Activated naive CD4-positive, alpha-beta T cell treated with anti-CD3 and anti-CD28 coated beads for 36 hours (primary cell): ENCODE measurements at regions of chr6 and their contacts with region 1.

Region 1: GRCh38 chr6:154218301-154218700 is 138.3 kb downstream of the IPCEF1 start:
- DNase-seq: peak; percentile 74
- H3K4me3 Mint-ChIP-seq: peak overlapping the region; percentile 65
- H3K27ac Mint-ChIP-seq: peak overlapping the region; percentile 83
- H3K4me1 Mint-ChIP-seq: peaks cover 66% of the 10 kb centered on the region
- H3K27me3 Mint-ChIP-seq: no peaks in the 10 kb centered on the region

Region 2: DNA sequence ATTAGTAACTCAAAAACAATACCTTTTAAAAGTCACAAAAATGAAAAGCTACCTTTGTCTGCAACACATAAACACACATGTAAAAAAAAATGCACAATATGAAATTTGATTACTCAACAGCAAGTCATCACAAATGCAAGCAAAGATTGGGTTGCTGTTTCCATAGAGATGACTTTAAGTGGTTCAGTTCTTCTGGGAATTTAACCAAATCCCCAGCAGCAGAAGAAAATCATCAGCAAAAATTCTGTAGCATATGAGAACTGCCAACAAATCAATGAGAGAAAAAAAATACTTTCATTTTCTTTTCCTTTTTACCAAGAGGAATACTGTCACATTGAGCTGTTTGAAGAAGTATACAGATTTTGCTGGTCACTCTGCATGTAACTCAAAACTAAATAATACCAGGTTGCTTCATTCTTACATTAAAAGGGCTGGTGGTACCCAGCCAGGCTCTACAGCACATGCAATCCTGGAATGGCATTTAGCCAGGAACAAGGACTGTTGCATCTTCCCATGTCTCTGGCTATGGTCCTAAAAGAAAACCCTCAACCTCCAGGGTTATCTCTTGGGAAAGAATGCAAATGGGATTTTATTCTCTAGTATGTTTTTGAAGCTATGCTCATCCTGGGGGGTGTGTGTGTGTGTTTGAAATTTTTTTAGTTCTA is 21.0 kb before region 1 on chr6:
- CTCF ChIA-PET with region 1: interaction called, 3 read pairs
- intact Hi-C with region 1: loop called (anchors 1 kb)
- DNase-seq: no peak
- H3K4me3 Mint-ChIP-seq: peak overlapping the region; percentile 28
- H3K27ac Mint-ChIP-seq: no peak overlapping the region
- H3K4me1 Mint-ChIP-seq: peaks cover 60% of the 10 kb centered on the region
- H3K27me3 Mint-ChIP-seq: no peaks in the 10 kb centered on the region

Region 3: GRCh38 chr6:154202339-154202738 is 16.0 kb before region 1 on chr6:
- CTCF ChIA-PET with region 1: interaction called, 3 read pairs
- intact Hi-C with region 1: loop called (anchors 1 kb)
- DNase-seq: no peak
- H3K4me3 Mint-ChIP-seq: no peak overlapping the region
- H3K27ac Mint-ChIP-seq: no peak overlapping the region
- H3K4me1 Mint-ChIP-seq: peaks cover 65% of the 10 kb centered on the region
- H3K27me3 Mint-ChIP-seq: no peaks in the 10 kb centered on the region

Region 4: GRCh38 chr6:154229786-154230185 is 11.5 kb after region 1 on chr6:
- CTCF ChIA-PET with region 1: interaction called, 14 read pairs
- intact Hi-C with region 1: loop called (anchors 1 kb)
- DNase-seq: peak; percentile 84
- H3K4me3 Mint-ChIP-seq: peak overlapping the region; percentile 66
- H3K27ac Mint-ChIP-seq: peak overlapping the region; percentile 86
- H3K4me1 Mint-ChIP-seq: peaks cover 81% of the 10 kb centered on the region
- H3K27me3 Mint-ChIP-seq: no peaks in the 10 kb centered on the region

Region 5: DNA sequence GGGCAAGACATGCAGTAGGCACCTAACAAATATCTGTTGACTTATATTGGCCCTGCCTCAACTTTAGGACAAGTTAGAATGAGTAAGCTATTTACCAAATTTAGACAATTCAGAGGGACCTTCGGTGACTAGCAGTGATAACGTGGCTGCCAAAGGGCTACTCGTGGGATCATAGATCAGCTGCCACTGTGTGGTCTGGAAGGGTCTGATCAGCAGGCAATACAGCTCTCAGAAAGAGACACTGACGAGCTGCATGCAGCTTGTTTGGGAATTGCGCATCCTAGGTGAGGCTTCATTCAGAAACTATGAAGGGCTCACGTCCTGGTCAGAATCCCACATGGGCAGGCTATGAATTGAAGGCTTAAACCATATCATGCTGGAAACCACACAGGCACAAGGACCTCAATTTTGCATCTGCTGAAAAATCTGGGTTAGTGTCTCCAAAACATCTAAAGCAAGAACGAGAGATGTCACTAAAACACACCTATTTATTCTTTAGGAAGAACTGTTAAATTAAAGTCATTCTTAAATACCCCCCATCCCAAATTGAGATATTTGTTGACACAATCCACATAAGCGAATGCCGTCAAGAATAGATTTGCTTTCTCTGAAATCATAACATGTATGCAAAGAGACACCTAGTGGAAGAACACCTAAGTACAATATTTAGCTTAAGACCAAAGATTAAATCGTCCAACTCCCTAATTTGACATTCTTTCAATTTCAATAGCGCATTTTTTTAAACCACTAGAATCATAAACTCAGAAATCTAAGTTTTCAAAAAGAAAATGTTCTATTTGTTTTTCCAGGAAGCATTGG is 58.7 kb after region 1 on chr6:
- CTCF ChIA-PET with region 1: interaction called, 11 read pairs
- intact Hi-C with region 1: loop called (anchors 2 kb)
- DNase-seq: no peak
- H3K4me3 Mint-ChIP-seq: peak overlapping the region; percentile 65
- H3K27ac Mint-ChIP-seq: no peak overlapping the region
- H3K4me1 Mint-ChIP-seq: peaks cover 34% of the 10 kb centered on the region
- H3K27me3 Mint-ChIP-seq: no peaks in the 10 kb centered on the region

Region 6: GRCh38 chr6:154548130-154548830 is 330.0 kb after region 1 on chr6:
- CTCF ChIA-PET with region 1: no interaction called
- intact Hi-C with region 1: no loop called
- DNase-seq: no peak
- H3K4me3 Mint-ChIP-seq: no peak overlapping the region
- H3K27ac Mint-ChIP-seq: no peak overlapping the region
- H3K4me1 Mint-ChIP-seq: no peaks in the 10 kb centered on the region
- H3K27me3 Mint-ChIP-seq: peaks cover 3% of the 10 kb centered on the region